ENCODE measurements at regions of chr14 and their contacts with region 1.

Region 1: DNA sequence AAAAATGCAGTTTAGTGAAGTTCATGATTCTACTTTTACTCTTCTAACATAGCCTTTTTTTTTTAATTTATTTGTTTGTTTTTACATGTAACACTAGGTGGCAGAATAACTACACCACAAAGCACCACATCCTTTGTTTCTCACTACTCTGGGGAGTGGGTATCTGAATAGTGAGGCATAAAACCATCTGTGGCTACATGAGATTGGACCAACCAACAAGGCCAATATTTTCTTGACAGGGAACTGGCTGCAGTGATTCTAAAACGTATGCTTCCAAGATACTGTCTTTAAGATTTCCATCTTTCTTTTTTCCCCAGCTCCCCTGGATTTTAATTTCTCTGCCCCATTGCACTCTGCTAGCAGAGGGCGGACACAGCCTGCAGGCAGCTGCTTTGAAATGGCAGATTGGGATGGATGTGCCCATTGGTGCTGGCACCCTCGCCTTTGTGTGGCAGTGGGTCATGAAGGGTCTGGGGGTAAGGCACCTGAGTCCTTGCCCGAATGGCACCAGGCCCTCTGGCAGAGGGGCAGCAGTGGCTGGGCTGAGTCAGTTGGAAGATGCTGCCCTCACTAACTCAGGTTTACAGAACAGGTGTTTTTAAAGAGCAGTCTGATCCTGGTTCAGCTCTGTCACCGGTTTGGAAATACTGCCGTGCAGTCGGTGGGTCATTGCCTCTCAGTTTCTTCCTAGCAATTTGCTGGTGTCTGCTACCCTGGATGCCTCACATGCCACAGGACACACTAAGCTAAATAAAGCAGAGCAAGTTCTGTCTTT is 429.1 kb downstream of the RAD51B start:
- DNase-seq: no peak
- ATAC-seq: peak; percentile 53
- H3K4me3 Mint-ChIP-seq: no peak overlapping the region
- H3K27ac Mint-ChIP-seq: no peak overlapping the region
- H3K4me1 Mint-ChIP-seq: peaks cover 25% of the 10 kb centered on the region
- H3K27me3 Mint-ChIP-seq: no peaks in the 10 kb centered on the region

Region 2: GRCh38 chr14:68283378-68284123 is 34.9 kb after region 1 on chr14:
- CTCF ChIA-PET with region 1: interaction called, 36 read pairs
- POLR2A ChIA-PET with region 1: no interaction called
- DNase-seq: peak; percentile 84
- ATAC-seq: peak; percentile 78
- H3K4me3 Mint-ChIP-seq: peak overlapping the region; percentile 57
- H3K27ac Mint-ChIP-seq: peak overlapping the region; percentile 98
- H3K4me1 Mint-ChIP-seq: peaks cover 50% of the 10 kb centered on the region
- H3K27me3 Mint-ChIP-seq: no peaks in the 10 kb centered on the region

Region 3: DNA sequence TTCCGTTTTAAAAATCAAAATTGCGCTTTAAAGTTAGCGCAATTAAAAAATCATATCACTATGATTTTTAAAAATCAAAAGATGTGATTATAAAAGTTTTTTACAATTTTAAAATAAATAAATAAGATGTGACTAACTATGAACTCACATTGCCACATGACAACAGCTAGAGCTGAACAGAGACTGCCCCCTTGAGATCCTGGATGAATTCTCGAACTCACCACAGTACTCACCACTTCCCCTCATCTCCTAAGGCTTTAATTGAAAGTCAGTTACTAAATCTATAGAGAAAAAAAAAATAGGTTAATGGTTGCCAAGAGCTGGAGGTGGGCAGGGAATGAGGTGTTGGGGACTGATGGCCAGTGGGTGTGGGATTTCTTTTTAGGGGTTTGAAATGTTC is 160.0 kb after region 1 on chr14:
- CTCF ChIA-PET with region 1: interaction called, 25 read pairs
- POLR2A ChIA-PET with region 1: no interaction called
- DNase-seq: peak; percentile 46
- ATAC-seq: peak; percentile 73
- H3K4me3 Mint-ChIP-seq: no peak overlapping the region
- H3K27ac Mint-ChIP-seq: no peak overlapping the region
- H3K4me1 Mint-ChIP-seq: peaks cover 33% of the 10 kb centered on the region
- H3K27me3 Mint-ChIP-seq: no peaks in the 10 kb centered on the region

Region 4: DNA sequence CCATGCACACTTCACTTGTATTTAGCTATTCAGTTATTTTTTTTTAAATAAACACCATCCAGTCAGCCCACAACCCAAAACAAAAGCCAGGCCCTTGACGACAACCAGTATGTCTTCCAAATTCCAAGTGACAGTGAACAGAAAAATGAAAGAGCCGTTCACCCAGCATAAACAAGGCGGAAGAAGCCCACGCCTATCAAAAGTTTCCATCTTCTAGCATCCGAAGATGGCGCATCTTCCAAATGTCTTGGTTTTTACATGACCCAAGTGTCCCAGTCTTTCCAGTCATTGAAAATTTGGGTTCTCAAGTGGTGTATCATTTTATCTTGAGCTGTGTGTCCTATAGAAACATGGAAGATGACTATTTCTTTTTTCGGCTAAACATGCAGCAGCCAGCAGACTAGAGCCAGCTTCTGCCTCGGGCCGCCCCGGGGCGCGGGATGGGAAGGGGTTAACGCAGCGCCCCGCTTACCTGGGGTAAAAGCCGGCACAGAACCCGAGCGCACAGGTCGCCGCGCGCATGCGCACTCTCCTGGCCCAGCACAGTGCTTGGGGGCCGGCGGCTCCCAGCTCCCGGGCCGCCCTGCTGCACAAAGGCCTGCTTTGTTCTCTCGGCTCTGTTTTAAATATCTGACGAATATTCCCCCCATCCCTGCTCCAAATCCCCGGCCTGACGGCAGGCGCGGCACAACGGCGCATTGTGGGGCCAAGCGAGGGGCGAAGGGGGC is 379.4 kb after region 1 on chr14:
- CTCF ChIA-PET with region 1: no interaction called
- POLR2A ChIA-PET with region 1: no interaction called
- DNase-seq: peak; percentile 47
- ATAC-seq: peak; percentile 75
- H3K4me3 Mint-ChIP-seq: peak overlapping the region; percentile 65
- H3K27ac Mint-ChIP-seq: no peak overlapping the region
- H3K4me1 Mint-ChIP-seq: peaks cover 14% of the 10 kb centered on the region
- H3K27me3 Mint-ChIP-seq: peaks cover 16% of the 10 kb centered on the region

Region 5: DNA sequence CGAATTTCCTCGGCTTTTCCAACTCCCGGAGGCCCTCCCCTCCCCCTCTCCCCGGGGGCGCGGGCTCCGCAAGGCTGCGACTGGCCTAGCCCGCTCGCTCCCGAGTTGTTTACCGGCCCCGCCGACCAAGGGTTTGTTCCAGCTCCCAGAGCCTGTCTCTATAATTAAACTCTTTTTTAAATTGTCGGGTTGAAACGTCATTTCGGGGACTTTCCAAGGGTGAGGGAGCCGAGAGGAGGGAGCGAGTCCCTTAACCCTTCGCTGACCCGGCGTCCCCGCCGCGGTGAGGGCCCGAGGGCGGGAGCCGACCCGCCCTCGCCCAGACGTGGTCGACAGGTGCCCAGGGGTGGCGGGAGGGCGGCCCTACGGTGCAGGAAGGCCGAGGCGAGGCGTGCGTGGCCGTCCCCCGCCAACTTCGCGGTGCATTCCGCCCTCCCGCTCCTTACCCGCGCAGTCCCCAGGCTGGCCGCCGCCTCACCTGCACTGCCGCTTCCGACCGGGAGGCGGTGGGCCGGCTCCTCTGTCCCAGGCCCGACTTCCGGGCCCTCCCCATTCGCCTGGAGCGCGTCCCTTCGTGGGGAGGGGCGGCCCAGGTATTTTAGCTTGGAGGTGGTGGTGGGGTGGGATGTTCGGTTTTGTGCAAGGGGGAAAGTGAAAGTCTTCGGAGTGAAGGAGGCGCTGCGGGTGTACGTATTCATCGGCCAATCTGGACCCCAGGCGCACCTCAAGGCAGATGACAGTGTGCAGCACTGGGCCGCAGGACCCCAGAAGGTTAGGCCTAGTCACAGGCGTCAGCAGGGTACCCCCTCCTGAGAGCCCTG is 547.1 kb after region 1 on chr14:
- CTCF ChIA-PET with region 1: interaction called, 146 read pairs
- POLR2A ChIA-PET with region 1: no interaction called
- DNase-seq: peak; percentile 86
- ATAC-seq: peak; percentile 50
- H3K4me3 Mint-ChIP-seq: peak overlapping the region; percentile 87
- H3K27ac Mint-ChIP-seq: peak overlapping the region; percentile 100
- H3K4me1 Mint-ChIP-seq: peaks cover 41% of the 10 kb centered on the region
- H3K27me3 Mint-ChIP-seq: no peaks in the 10 kb centered on the region

Measured in activated CD8-positive, alpha-beta T cell treated with anti-CD3 and anti-CD28 coated beads, Interleukin-2, amount 10 ng/mL, durations not matched to agents 7 days and 5 days (primary cell).